Activated CD4-positive, alpha-beta T cell treated with anti-CD3 and anti-CD28 coated beads for 36 hours (primary cell): ENCODE measurements at regions of chr15 and their contacts with region 1.

Region 1: DNA sequence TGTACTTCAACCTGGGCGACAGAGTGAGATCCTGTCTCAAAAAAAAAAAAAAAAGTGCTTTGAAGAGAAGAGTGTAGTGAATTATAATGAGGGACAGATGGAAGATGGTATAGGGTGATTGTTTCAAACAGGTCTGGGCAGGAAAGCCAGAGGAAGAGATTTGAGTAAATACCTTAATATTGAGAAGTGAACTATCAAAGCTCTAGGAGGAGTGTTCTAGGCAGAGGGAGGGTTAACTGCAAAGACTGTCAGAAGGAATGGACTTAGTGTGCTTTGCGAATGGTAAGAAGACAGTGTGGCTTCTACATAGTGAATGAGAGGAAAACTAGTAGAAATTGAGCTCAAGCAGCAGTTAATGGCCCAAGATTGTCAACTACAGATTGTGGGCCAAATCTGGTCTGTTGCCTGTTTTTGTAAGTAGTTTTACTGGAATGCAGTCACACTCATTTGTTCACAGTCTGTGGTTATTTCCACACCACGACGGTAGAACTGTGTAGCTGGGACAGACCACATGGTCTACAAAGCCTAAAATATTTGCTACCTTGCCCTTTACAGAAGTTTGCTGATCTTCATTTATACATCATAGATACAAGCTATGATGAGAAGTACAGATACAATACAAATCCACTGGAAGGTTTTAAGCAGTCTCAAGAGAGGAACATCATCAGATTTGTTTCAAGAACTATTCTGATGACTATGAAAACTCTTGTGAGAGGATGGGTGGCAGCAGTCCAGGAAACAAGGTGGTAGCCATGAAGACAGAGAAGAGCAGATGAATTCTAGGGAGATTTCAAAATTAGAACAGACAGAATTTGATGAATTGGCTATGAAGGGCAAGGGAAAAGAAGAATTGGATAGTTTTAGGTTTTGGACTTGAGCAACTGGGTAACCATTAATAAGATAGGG is 16.5 kb upstream of the USP50 start:
- DNase-seq: peak; percentile 34
- ATAC-seq: peak; percentile 75
- H3K4me3 Mint-ChIP-seq: no peak overlapping the region
- H3K27ac Mint-ChIP-seq: peak overlapping the region; percentile 79
- H3K4me1 Mint-ChIP-seq: peaks cover 16% of the 10 kb centered on the region
- H3K27me3 Mint-ChIP-seq: no peaks in the 10 kb centered on the region

Region 2: DNA sequence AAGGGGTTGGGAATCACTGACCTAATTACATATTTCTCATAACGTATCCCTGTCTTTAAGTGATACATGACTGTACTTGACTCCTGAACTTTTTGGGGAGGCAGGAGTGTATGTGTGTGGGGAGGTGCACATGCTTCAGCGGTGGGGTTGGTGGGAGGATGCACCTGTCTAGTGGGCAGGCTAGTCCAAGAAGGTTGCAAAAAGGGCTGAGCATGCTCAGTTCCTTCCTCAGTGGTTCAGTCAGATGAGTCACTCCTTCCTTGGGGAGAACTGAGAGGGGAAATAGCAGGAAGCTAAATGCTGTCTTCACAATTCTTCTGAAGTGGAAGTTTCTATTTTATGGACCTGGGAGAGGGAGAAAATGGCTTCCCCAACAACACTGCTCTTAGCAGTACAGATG is 320.9 kb after region 1 on chr15:
- CTCF ChIA-PET with region 1: interaction called, 3 read pairs
- POLR2A ChIA-PET with region 1: interaction called, 4 read pairs
- intact Hi-C with region 1: loop called (anchors 5 to 10 kb)
- DNase-seq: peak; percentile 26
- ATAC-seq: no peak
- H3K4me3 Mint-ChIP-seq: no peak overlapping the region
- H3K27ac Mint-ChIP-seq: peak overlapping the region; percentile 37
- H3K4me1 Mint-ChIP-seq: peaks cover 58% of the 10 kb centered on the region
- H3K27me3 Mint-ChIP-seq: no peaks in the 10 kb centered on the region